ENCODE measurements at regions of chr12 and their contacts with region 1.

Region 1: GRCh38 chr12:122752464-122753318 is at the start of gene DENR:
- DNase-seq: peak; percentile 95 to 98 (median 98)
- H3K4me3 ChIP-seq: peak within 1 kb of the TSS; percentile 72 to 94 (median 87)
- H3K27ac ChIP-seq: peak within 1 kb of the TSS; percentile 94 to 97
- H3K4me1 ChIP-seq: peaks cover 10 to 37% (median 27%) of the 10 kb centered on the region in 4 experiments
- H3K27me3 ChIP-seq: no peaks in the 10 kb centered on the region

Region 2: GRCh38 chr12:122646517-122647217 is 106.0 kb before region 1 on chr12:
- CTCF ChIA-PET with region 1: interaction called, 10 read pairs
- POLR2A ChIA-PET with region 1: interaction called, 3 read pairs
- DNase-seq: peak; percentile 97 to 99 (median 99)
- H3K4me3 ChIP-seq: peak overlapping the region in 5 of 7 experiments; percentile 26 to 56 (median 48)
- H3K27ac ChIP-seq: peak overlapping the region; percentile 85 to 96
- H3K4me1 ChIP-seq: peaks cover 6 to 39% (median 26%) of the 10 kb centered on the region in 4 experiments
- H3K27me3 ChIP-seq: no peaks in the 10 kb centered on the region

Region 3: DNA sequence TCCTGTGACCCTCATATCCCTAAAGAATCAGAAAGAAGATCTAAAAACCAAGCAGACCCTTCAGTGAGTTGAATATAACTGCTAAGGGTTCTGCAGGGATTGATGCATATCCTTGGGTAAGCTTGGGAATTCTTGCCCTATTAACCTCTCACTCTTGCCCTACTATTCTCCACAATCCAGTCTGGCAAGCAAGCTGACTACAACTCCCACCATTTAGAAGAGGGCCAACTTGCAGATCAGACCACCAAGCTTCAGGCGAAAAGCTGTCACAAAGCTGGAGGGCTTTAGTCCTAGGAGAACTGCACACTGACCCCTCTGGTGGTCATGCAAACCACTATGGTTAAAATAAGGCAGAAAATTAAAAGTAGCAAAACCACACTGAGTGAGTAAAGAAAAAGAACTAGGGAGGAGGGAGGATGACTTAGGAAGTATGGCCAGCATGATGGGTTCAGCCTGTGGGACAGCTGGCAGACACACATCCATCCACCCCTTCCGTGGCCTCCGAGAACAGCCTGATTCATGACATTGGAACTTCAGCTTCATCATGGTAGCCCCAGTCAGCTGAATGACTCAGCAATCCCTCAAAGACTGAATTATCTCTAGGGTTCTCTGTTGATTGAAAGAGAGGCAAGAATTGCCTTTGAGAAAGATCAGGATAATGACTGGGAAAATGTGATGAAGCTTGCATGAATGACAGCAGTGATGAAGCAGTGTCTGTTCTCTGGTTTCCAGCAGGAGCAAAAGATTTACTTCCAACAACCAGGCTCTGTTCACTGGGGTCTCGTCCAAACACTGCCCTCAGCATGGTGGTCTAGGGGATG is 373.7 kb after region 1 on chr12:
- CTCF ChIA-PET with region 1: no interaction called
- POLR2A ChIA-PET with region 1: no interaction called
- DNase-seq: peak in 2 of 3 donors; percentile 73 to 76
- H3K4me3 ChIP-seq: no peak overlapping the region
- H3K27ac ChIP-seq: no peak overlapping the region
- H3K4me1 ChIP-seq: peaks cover 0 to 13% (median 11%) of the 10 kb centered on the region in 4 experiments
- H3K27me3 ChIP-seq: no peaks in the 10 kb centered on the region

Measured in common myeloid progenitor, CD34-positive (primary cell).